ENCODE measurements at regions of chr21 and their contacts with region 1.

Region 1: GRCh38 chr21:42009831-42010523 is at the start of gene ZBTB21:
- DNase-seq: peak; percentile 98
- H3K4me3 ChIP-seq: peak within 1 kb of the TSS; percentile 80 to 83
- H3K27ac ChIP-seq: peak within 1 kb of the TSS; percentile 96 to 100
- H3K4me1 ChIP-seq: no peaks in the 10 kb centered on the region
- H3K27me3 ChIP-seq: no peaks in the 10 kb centered on the region
- CTCF ChIP-seq: peak in 1 of 4 experiments; percentile 20
- POLR2A ChIP-seq: peak; percentile 98
- total RNA-seq, gene ZBTB21: 12.3 to 13.6 TPM

Region 2: GRCh38 chr21:42117229-42117966 is 107.4 kb after region 1 on chr21:
- intact Hi-C with region 1: loop called (anchors 5 kb)
- DNase-seq: peak; percentile 68
- H3K4me3 ChIP-seq: no peak overlapping the region
- H3K27ac ChIP-seq: no peak overlapping the region
- H3K4me1 ChIP-seq: peaks cover 5% of the 10 kb centered on the region
- H3K27me3 ChIP-seq: no peaks in the 10 kb centered on the region
- CTCF ChIP-seq: peak; percentile 90 to 95 (median 94)
- POLR2A ChIP-seq: no peak

Region 3: GRCh38 chr21:42187976-42188653 is 178.1 kb after region 1 on chr21:
- intact Hi-C with region 1: no loop called
- DNase-seq: no peak
- H3K4me3 ChIP-seq: no peak overlapping the region
- H3K27ac ChIP-seq: no peak overlapping the region
- H3K4me1 ChIP-seq: no peaks in the 10 kb centered on the region
- H3K27me3 ChIP-seq: no peaks in the 10 kb centered on the region
- CTCF ChIP-seq: no peak
- POLR2A ChIP-seq: no peak

Measured in prostate gland (tissue), 2 donors.